ENCODE measurements at regions of chr13 and their contacts with region 1.

Region 1: DNA sequence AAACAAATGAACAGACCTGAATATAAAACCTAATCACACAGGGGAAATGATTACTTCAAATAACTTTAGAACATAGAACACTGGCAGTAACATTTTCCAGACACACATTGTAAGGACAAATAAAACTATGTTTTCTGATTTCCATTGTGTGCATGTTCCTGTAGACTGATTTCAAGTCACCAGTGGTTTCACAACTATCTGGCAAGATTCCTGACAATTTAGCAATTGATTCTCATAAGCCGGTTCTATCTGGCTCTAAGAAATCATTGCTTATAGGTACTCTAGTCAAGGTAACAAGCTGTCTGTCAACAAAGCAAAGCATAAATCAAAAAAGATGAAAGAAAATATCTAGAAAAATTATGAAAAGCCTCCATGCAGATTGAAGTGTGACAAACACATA is 19.6 kb upstream of the PCCA start:
- DNase-seq: no peak
- ATAC-seq: no peak
- H3K4me3 ChIP-seq: no peak overlapping the region
- H3K27ac ChIP-seq: no peak overlapping the region
- H3K4me1 ChIP-seq: no peaks in the 10 kb centered on the region
- H3K27me3 ChIP-seq: no peaks in the 10 kb centered on the region
- CTCF ChIP-seq: no peak

Region 2: GRCh38 chr13:100044936-100045335 is 24.3 kb before region 1 on chr13:
- CTCF ChIA-PET with region 1: no interaction called
- POLR2A ChIA-PET with region 1: interaction called, 10 read pairs
- in situ Hi-C with region 1: no loop called
- intact Hi-C with region 1: no loop called
- DNase-seq: no peak
- ATAC-seq: no peak
- H3K4me3 ChIP-seq: no peak overlapping the region
- H3K27ac ChIP-seq: no peak overlapping the region
- H3K4me1 ChIP-seq: peaks cover 4% of the 10 kb centered on the region
- H3K27me3 ChIP-seq: no peaks in the 10 kb centered on the region
- CTCF ChIP-seq: no peak

Region 3: DNA sequence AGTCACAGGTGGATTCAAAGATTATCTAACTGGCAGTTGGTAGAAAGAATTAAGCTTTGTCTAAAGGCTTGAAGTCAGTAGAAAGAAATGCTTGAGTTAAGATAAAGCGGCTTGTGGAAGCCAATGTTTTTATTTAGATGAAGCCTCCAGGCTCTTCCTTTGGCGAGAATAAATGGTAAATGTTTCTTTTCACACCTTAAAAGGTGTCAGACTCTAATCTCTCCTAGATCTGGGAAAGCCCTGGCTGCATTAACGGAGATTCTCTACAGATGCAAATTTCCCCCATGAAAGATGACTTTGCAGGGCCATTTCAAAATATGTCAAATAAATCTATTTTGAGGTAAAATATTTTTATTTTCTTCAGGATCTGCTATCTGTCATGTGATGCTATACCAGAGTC is 18.2 kb before region 1 on chr13:
- CTCF ChIA-PET with region 1: no interaction called
- POLR2A ChIA-PET with region 1: interaction called, 18 read pairs
- in situ Hi-C with region 1: no loop called
- intact Hi-C with region 1: no loop called
- DNase-seq: no peak
- ATAC-seq: no peak
- H3K4me3 ChIP-seq: no peak overlapping the region
- H3K27ac ChIP-seq: no peak overlapping the region
- H3K4me1 ChIP-seq: no peaks in the 10 kb centered on the region
- H3K27me3 ChIP-seq: no peaks in the 10 kb centered on the region
- CTCF ChIP-seq: no peak

Measured in Panc1 (cell line).